AG04449 (cell line): ENCODE measurements at regions of chr17 and their contacts with region 1.

Region 1: DNA sequence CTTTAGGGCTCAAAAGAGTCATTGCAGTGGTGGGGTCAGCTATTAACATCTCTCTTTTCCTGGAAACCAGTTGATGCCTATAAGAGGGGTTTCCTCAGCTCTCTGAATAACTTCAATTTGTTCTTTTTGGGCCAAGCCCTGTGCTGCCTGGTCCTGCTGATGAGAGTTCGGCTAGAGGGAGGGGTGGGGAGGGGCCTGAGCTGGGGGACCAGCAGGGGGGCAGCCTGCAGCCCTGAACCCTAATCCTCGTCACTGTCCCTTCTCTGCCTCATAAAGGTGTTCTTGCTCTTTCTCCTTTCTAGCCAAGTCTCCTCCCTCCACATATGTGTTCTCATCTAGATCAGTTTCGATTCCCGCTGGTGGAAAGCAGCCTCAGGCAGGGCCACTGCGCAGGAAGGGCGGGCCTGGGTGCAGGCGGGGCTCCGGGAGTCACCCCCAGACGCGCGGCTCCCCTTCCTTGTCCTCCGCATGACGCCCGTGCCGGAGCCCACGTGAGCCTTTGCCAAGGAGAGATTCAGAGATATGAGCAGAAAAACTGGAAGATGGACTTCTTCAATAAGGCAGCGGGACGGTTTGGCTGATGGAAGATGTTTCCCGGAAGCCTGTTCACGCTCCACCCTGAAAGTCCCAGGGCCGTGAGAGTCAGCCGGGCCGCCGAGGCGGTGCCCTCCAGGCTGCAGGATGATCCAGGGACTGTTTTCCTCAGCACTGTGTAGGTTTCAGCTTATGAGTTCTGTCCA is 15.0 kb upstream of the RHOT1 start:
- DNase-seq: no peak
- H3K4me3 ChIP-seq: peak overlapping the region; percentile 65
- CTCF ChIP-seq: no peak

Region 2: DNA sequence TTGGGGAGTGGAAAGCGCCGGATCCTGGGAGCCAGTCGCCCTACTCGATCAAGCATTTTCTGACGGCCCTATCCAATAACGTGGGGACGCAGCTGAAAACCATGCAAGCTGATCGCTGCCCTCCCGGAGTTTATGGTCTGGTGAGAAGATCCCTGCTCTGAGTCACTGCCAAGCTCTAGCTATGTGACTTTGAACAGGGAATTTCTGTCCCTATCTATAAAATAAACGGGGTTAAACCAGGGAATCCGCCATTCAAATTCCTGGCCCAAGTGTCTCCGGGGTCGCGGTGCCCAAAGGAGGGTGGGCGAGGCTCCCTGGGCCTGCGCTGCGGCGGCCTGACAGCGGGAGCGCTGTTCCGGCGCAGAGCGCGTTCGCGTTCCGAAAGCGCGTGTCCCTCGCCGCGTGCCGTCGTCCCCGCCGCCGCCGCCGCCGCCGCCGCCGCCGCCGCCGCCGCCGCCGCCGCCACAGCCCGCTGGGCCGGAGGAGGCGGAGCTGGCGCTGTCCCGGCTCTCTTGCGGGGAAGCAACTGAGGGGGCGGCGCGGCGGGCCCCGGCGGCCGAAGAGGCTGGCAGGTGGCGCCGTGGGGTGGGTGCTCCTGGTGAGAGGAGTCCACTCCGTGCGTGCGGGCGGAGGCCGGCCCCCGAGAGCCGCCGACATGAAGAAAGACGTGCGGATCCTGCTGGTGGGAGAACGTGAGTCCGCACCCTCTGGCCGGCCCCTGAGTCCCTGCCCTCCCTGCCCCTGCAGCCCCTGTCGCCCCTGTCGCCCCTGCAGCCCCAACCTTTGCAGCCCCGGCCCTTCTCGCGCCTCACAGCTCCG is 14.9 kb after region 1 on chr17 and contains the start of gene RHOT1:
- CTCF ChIA-PET with region 1: interaction called, 57 read pairs
- POLR2A ChIA-PET with region 1: no interaction called
- DNase-seq: peak; percentile 46
- H3K4me3 ChIP-seq: peak within 1 kb of the TSS; percentile 92
- CTCF ChIP-seq: peak; percentile 83

Region 3: GRCh38 chr17:32240750-32241149 is 113.4 kb after region 1 on chr17:
- CTCF ChIA-PET with region 1: no interaction called
- POLR2A ChIA-PET with region 1: no interaction called
- DNase-seq: no peak
- H3K4me3 ChIP-seq: no peak overlapping the region
- CTCF ChIP-seq: no peak

Region 4: DNA sequence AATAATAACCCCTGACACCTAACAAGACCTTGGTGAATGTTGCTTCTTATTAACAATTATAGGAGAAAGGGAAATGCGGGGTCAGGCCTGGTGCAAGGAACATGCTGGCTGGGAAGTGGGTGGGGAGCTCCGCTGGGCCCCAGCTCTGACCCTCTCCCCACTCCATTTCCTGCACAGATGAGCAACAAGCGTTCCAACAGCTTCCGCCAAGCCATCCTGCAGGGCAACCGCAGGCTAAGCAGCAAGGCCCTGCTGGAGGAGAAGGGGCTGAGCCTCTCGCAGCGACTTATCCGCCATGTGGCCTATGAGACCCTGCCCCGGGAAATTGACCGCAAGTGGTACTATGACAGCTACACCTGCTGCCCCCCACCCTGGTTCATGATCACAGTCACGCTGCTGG is 161.3 kb after region 1 on chr17:
- CTCF ChIA-PET with region 1: no interaction called
- POLR2A ChIA-PET with region 1: no interaction called
- DNase-seq: no peak
- H3K4me3 ChIP-seq: no peak overlapping the region
- CTCF ChIP-seq: no peak

Region 5: GRCh38 chr17:32588982-32589381 is 461.7 kb after region 1 on chr17:
- CTCF ChIA-PET with region 1: no interaction called
- POLR2A ChIA-PET with region 1: no interaction called
- DNase-seq: no peak
- H3K4me3 ChIP-seq: no peak overlapping the region
- CTCF ChIP-seq: no peak